Naive thymus-derived CD4-positive, alpha-beta T cell (primary cell): ENCODE measurements at regions of chr17 and their contacts with region 1.

Region 1: GRCh38 chr17:2041561-2042366 is at the start of gene OVCA2:
- DNase-seq: peak; percentile 94 to 98 (median 96)
- ATAC-seq: peak; percentile 97
- H3K4me3 ChIP-seq: peak within 1 kb of the TSS; percentile 86
- H3K4me3 Mint-ChIP-seq: peak within 1 kb of the TSS; percentile 89 to 100 (median 92)
- H3K27ac ChIP-seq: peak within 1 kb of the TSS; percentile 89
- H3K27ac Mint-ChIP-seq: peak within 1 kb of the TSS; percentile 87 to 99 (median 94)
- H3K4me1 ChIP-seq: peaks cover 8 to 16% of the 10 kb centered on the region in 2 donors
- H3K4me1 Mint-ChIP-seq: peaks cover 9 to 29% (median 22%) of the 10 kb centered on the region in 7 donors
- H3K27me3 ChIP-seq: no peaks in the 10 kb centered on the region
- H3K27me3 Mint-ChIP-seq: no peaks in the 10 kb centered on the region
- total RNA-seq, gene OVCA2: 24.5 to 37.9 (median 31.8) TPM

Region 2: DNA sequence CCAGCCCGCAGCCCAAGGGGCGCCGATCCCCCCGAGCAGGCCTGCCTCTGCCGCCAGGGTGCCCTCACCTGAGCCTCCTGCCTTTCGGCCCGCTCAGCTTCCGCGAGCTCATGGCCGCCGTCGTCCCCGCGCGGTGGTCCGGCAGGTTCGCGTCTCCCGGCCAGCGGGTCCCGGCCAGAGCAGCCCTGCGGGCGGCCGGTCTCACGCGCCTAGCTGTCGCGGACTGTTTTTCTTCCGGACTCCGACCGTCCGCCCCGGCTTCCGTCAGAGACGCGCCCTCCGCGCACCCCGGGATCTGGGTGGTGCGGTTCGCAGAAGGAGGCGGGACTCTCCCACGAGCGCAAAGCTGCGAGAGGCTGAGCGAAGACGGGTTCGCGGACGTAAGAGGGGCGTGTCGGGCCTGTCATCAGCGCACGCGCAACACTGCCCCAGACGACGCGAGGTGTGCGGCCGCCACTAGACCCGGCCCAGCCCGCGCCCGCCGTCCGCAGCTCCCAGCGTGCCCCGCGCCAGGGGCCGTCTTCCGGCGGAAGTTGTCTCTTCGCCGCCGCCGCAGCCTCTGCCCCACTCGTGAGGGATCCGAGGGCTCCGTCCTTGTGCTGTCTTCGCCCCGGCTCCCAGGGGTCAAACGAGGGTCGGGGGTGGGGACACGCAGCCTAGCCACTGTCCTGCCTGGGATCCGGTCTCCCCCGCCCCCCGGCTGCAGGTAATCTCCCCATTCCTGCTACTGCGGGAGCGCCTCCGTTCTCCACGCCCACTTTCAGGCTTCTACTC is 525.2 kb before region 1 on chr17 and contains the start of gene INPP5K:
- CTCF ChIA-PET with region 1: no interaction called
- POLR2A ChIA-PET with region 1: no interaction called
- intact Hi-C with region 1: loop called in 1 of 2 experiments (anchors 5 kb)
- DNase-seq: peak; percentile 92 to 99 (median 97)
- ATAC-seq: peak; percentile 98
- H3K4me3 ChIP-seq: peak within 1 kb of the TSS; percentile 84
- H3K4me3 Mint-ChIP-seq: peak within 1 kb of the TSS; percentile 78 to 93 (median 91)
- H3K27ac ChIP-seq: peak within 1 kb of the TSS; percentile 97
- H3K27ac Mint-ChIP-seq: peak within 1 kb of the TSS; percentile 68 to 97 (median 92)
- H3K4me1 ChIP-seq: peaks cover 9 to 14% of the 10 kb centered on the region in 2 donors
- H3K4me1 Mint-ChIP-seq: peaks cover 18 to 47% (median 29%) of the 10 kb centered on the region in 7 donors
- H3K27me3 ChIP-seq: no peaks in the 10 kb centered on the region
- H3K27me3 Mint-ChIP-seq: no peaks in the 10 kb centered on the region
- total RNA-seq, gene INPP5K: 50.5 to 184 (median 84.2) TPM

Region 3: GRCh38 chr17:1673041-1673785 is 368.6 kb before region 1 on chr17:
- CTCF ChIA-PET with region 1: no interaction called
- POLR2A ChIA-PET with region 1: no interaction called
- intact Hi-C with region 1: loop called (anchors 1 to 5 kb)
- DNase-seq: peak in 1 of 9 donors; percentile 7
- ATAC-seq: peak; percentile 26
- H3K4me3 ChIP-seq: no peak overlapping the region
- H3K4me3 Mint-ChIP-seq: no peak overlapping the region
- H3K27ac ChIP-seq: no peak overlapping the region
- H3K27ac Mint-ChIP-seq: peak overlapping the region in 5 of 9 donors; percentile 6 to 60 (median 43)
- H3K4me1 ChIP-seq: no peaks in the 10 kb centered on the region
- H3K4me1 Mint-ChIP-seq: peaks cover 19 to 45% (median 34%) of the 10 kb centered on the region in 7 donors
- H3K27me3 ChIP-seq: no peaks in the 10 kb centered on the region
- H3K27me3 Mint-ChIP-seq: no peaks in the 10 kb centered on the region

Region 4: GRCh38 chr17:1882836-1883235 is 158.9 kb before region 1 on chr17:
- CTCF ChIA-PET with region 1: interaction called, 5 read pairs
- POLR2A ChIA-PET with region 1: no interaction called
- intact Hi-C with region 1: loop called in 1 of 2 experiments (anchors 5 kb)
- DNase-seq: peak in 4 of 9 donors; percentile 9 to 30 (median 20)
- ATAC-seq: peak; percentile 46
- H3K4me3 ChIP-seq: no peak overlapping the region
- H3K4me3 Mint-ChIP-seq: no peak overlapping the region
- H3K27ac ChIP-seq: no peak overlapping the region
- H3K27ac Mint-ChIP-seq: peak overlapping the region in 3 of 9 donors; percentile 28 to 74 (median 47)
- H3K4me1 ChIP-seq: no peaks in the 10 kb centered on the region
- H3K4me1 Mint-ChIP-seq: peaks cover 0 to 31% (median 0%) of the 10 kb centered on the region in 7 donors
- H3K27me3 ChIP-seq: no peaks in the 10 kb centered on the region
- H3K27me3 Mint-ChIP-seq: no peaks in the 10 kb centered on the region

Region 5: GRCh38 chr17:2013994-2014317 is 27.8 kb before region 1 on chr17:
- CTCF ChIA-PET with region 1: no interaction called
- POLR2A ChIA-PET with region 1: no interaction called
- intact Hi-C with region 1: no loop called
- DNase-seq: no peak
- ATAC-seq: no peak
- H3K4me3 ChIP-seq: no peak overlapping the region
- H3K4me3 Mint-ChIP-seq: no peak overlapping the region
- H3K27ac ChIP-seq: no peak overlapping the region
- H3K27ac Mint-ChIP-seq: no peak overlapping the region
- H3K4me1 ChIP-seq: no peaks in the 10 kb centered on the region
- H3K4me1 Mint-ChIP-seq: peaks cover 0 to 4% (median 0%) of the 10 kb centered on the region in 7 donors
- H3K27me3 ChIP-seq: no peaks in the 10 kb centered on the region
- H3K27me3 Mint-ChIP-seq: peaks cover 0 to 28% (median 11%) of the 10 kb centered on the region in 5 donors

Region 6: GRCh38 chr17:2054512-2055291 is 12.9 kb after region 1 on chr17 and contains the start of gene HIC1:
- CTCF ChIA-PET with region 1: no interaction called
- POLR2A ChIA-PET with region 1: interaction called, 5 read pairs
- intact Hi-C with region 1: loop called (anchors 1 kb)
- DNase-seq: peak; percentile 59 to 91 (median 84)
- ATAC-seq: peak; percentile 63
- H3K4me3 ChIP-seq: peak within 1 kb of the TSS; percentile 68
- H3K4me3 Mint-ChIP-seq: peak within 1 kb of the TSS; percentile 76 to 87 (median 80)
- H3K27ac ChIP-seq: peak within 1 kb of the TSS; percentile 70
- H3K27ac Mint-ChIP-seq: peak within 1 kb of the TSS in 8 of 9 donors; percentile 28 to 91 (median 73)
- H3K4me1 ChIP-seq: peaks cover 17 to 29% of the 10 kb centered on the region in 2 donors
- H3K4me1 Mint-ChIP-seq: peaks cover 8 to 28% (median 19%) of the 10 kb centered on the region in 7 donors
- H3K27me3 ChIP-seq: no peaks in the 10 kb centered on the region
- H3K27me3 Mint-ChIP-seq: peaks cover 3 to 15% (median 5%) of the 10 kb centered on the region in 5 donors
- total RNA-seq, gene HIC1: 1.4 to 128 (median 6.3) TPM

Region 7: DNA sequence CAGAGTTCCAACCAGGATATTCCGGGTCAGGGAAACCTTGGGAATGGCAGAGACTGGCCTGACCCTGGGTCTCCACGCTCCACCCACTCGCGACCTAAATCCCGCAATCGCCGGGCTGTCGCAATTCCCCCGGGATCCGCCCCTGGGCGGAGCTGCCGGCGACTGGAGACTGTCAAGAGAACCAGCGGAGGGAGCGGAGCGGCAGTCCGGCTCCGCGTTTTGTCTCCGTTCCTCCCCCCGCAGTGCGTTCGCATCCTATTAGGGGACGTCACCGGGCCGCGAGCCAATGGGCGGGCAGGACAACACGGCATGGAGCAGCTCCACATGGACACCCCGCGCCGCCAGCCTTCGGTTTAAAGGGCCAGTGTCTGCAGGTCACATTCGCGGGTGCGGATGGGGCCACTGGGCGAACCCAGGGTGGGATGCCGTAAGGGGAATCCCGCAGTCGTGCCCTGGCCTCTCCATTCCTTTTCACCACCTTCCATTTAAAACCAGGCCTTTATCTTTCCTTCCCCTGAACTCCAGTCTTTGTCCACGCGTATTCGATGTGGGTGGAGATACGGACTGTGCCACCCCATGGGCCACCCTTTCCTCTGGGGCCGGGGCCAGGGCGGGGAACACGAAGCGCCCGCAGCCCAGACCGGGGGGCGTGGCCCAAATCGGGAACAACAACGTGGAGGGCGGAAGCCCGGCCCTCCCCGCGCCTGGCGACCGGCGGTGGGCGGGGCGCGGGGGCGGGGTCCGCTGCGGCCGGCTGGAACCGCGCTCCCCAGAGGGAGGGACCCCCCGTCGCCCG is 359.9 kb after region 1 on chr17:
- CTCF ChIA-PET with region 1: no interaction called
- POLR2A ChIA-PET with region 1: no interaction called
- intact Hi-C with region 1: loop called in 1 of 2 experiments (anchors 2 kb)
- DNase-seq: peak; percentile 94 to 100 (median 99)
- ATAC-seq: peak; percentile 73
- H3K4me3 ChIP-seq: peak overlapping the region; percentile 94
- H3K4me3 Mint-ChIP-seq: peak overlapping the region; percentile 94 to 100 (median 98)
- H3K27ac ChIP-seq: peak overlapping the region; percentile 97
- H3K27ac Mint-ChIP-seq: peak overlapping the region; percentile 97 to 100 (median 99)
- H3K4me1 ChIP-seq: peaks cover 6 to 30% of the 10 kb centered on the region in 2 donors
- H3K4me1 Mint-ChIP-seq: peaks cover 27 to 62% (median 35%) of the 10 kb centered on the region in 7 donors
- H3K27me3 ChIP-seq: no peaks in the 10 kb centered on the region
- H3K27me3 Mint-ChIP-seq: no peaks in the 10 kb centered on the region